ENCODE measurements at regions of chr18 and their contacts with region 1.

Region 1: GRCh38 chr18:49041435-49042245 is 90.9 kb upstream of the SMAD7 start:
- DNase-seq: peak; percentile 84
- H3K4me3 Mint-ChIP-seq: no peak overlapping the region
- H3K27ac Mint-ChIP-seq: no peak overlapping the region
- H3K4me1 Mint-ChIP-seq: peaks cover 8% of the 10 kb centered on the region
- H3K27me3 Mint-ChIP-seq: no peaks in the 10 kb centered on the region

Region 2: GRCh38 chr18:48762836-48763718 is 278.6 kb before region 1 on chr18:
- intact Hi-C with region 1: loop called (anchors 5 kb)
- DNase-seq: no peak
- H3K4me3 Mint-ChIP-seq: no peak overlapping the region
- H3K27ac Mint-ChIP-seq: no peak overlapping the region
- H3K4me1 Mint-ChIP-seq: peaks cover 3% of the 10 kb centered on the region
- H3K27me3 Mint-ChIP-seq: no peaks in the 10 kb centered on the region

Region 3: GRCh38 chr18:48975649-48976204 is 65.9 kb before region 1 on chr18:
- intact Hi-C with region 1: no loop called
- DNase-seq: peak; percentile 82
- H3K4me3 Mint-ChIP-seq: peak overlapping the region; percentile 51
- H3K27ac Mint-ChIP-seq: no peak overlapping the region
- H3K4me1 Mint-ChIP-seq: peaks cover 16% of the 10 kb centered on the region
- H3K27me3 Mint-ChIP-seq: peaks cover 51% of the 10 kb centered on the region

Region 4: DNA sequence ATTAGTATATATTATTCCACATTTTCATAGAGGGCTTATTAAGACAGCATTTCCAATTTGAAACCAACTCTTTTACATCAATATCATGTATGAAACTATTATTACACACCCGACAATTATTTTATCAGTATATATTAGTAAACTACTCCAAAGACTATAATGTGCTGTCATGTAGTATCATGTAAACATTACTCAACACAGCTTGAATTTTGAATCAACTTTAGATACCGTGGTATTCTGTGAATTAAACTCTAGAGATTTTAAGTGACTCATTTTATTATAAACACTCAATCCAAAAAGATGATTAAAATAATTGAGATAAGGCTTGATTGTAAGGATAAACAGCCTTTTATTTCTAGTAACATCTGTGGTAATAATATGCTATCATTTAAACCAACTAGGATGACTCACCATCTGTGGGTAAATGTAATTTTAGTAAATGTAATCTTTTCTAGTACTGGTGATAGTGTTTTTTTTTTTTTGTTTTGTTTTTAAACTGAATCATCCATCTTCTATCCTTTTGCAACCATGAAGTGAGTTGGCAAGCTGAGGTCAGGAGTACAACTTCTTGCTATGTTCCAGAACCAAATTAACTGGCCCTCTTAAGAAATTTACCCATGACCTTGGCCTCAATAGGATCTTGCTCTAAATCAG is 53.5 kb after region 1 on chr18:
- intact Hi-C with region 1: no loop called
- DNase-seq: no peak
- H3K4me3 Mint-ChIP-seq: no peak overlapping the region
- H3K27ac Mint-ChIP-seq: no peak overlapping the region
- H3K4me1 Mint-ChIP-seq: peaks cover 2% of the 10 kb centered on the region
- H3K27me3 Mint-ChIP-seq: no peaks in the 10 kb centered on the region

Measured in activated CD4-positive, alpha-beta T cell treated with anti-CD3 and anti-CD28 coated beads, Interleukin-2, amount 10 ng/mL, durations not matched to agents 24 days and 14 days (primary cell).